ENCODE measurements at regions of chr2 and their contacts with region 1.

Region 1: DNA sequence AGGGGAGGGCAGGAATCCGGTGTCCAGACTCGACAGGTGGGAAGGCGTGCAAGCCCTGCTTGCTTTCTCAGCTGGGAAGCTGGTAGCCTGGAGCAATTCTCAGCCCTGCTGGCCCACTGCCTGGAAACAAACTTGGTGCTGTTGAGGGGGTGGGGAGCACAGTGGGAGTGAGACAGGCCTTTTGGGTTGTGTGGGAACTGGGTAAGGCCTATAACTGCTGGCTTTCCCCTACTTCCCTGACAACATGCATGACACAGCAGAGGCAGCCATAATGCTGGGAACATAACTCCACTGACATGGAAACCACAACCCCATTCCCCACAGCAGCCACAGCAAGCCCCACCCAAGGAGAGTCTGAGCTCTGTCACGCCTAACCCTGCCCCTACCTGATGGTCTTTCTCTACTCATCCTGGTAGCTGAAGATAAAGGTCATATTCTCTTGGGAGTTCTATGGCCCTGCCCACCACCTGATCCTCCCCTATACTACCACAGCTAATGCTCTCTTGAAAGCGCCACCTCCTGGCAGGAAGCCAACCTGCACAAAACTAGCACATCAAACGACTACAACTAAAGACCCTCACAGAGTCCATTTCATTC is 122.9 kb upstream of the ACVR1C start:
- DNase-seq: no peak
- H3K4me3 ChIP-seq: no peak overlapping the region
- H3K27ac ChIP-seq: no peak overlapping the region
- H3K4me1 ChIP-seq: no peaks in the 10 kb centered on the region
- H3K27me3 ChIP-seq: no peaks in the 10 kb centered on the region
- CTCF ChIP-seq: no peak

Region 2: GRCh38 chr2:157302492-157303099 is 449.0 kb before region 1 on chr2:
- intact Hi-C with region 1: loop called (anchors 10 kb)
- DNase-seq: no peak
- H3K4me3 ChIP-seq: no peak overlapping the region
- H3K27ac ChIP-seq: no peak overlapping the region
- H3K4me1 ChIP-seq: no peaks in the 10 kb centered on the region
- H3K27me3 ChIP-seq: no peaks in the 10 kb centered on the region
- CTCF ChIP-seq: peak; percentile 71